Activated naive CD4-positive, alpha-beta T cell treated with anti-CD3 and anti-CD28 coated beads for 36 hours (primary cell): ENCODE measurements at regions of chr11 and their contacts with region 1.

Region 1: GRCh38 chr11:575996-576768 is at the start of gene PHRF1:
- DNase-seq: peak; percentile 96
- H3K4me3 Mint-ChIP-seq: peak within 1 kb of the TSS; percentile 88
- H3K27ac Mint-ChIP-seq: peak within 1 kb of the TSS; percentile 99
- H3K4me1 Mint-ChIP-seq: peaks cover 48% of the 10 kb centered on the region
- H3K27me3 Mint-ChIP-seq: peaks cover 6% of the 10 kb centered on the region
- total RNA-seq, gene PHRF1: 25.6 to 26.1 TPM

Region 2: GRCh38 chr11:406978-407739 is 169.0 kb before region 1 on chr11:
- CTCF ChIA-PET with region 1: no interaction called
- intact Hi-C with region 1: loop called (anchors 1 kb)
- DNase-seq: peak; percentile 91
- H3K4me3 Mint-ChIP-seq: peak overlapping the region; percentile 58
- H3K27ac Mint-ChIP-seq: no peak overlapping the region
- H3K4me1 Mint-ChIP-seq: peaks cover 2% of the 10 kb centered on the region
- H3K27me3 Mint-ChIP-seq: no peaks in the 10 kb centered on the region

Region 3: GRCh38 chr11:535519-536454 is 40.4 kb before region 1 on chr11 and contains the start of gene HRAS:
- CTCF ChIA-PET with region 1: no interaction called
- intact Hi-C with region 1: loop called (anchors 1 kb)
- DNase-seq: peak; percentile 94
- H3K4me3 Mint-ChIP-seq: peak within 1 kb of the TSS; percentile 88
- H3K27ac Mint-ChIP-seq: peak within 1 kb of the TSS; percentile 69
- H3K4me1 Mint-ChIP-seq: peaks cover 7% of the 10 kb centered on the region
- H3K27me3 Mint-ChIP-seq: no peaks in the 10 kb centered on the region
- total RNA-seq, gene HRAS: 22.0 to 25.8 TPM

Region 4: DNA sequence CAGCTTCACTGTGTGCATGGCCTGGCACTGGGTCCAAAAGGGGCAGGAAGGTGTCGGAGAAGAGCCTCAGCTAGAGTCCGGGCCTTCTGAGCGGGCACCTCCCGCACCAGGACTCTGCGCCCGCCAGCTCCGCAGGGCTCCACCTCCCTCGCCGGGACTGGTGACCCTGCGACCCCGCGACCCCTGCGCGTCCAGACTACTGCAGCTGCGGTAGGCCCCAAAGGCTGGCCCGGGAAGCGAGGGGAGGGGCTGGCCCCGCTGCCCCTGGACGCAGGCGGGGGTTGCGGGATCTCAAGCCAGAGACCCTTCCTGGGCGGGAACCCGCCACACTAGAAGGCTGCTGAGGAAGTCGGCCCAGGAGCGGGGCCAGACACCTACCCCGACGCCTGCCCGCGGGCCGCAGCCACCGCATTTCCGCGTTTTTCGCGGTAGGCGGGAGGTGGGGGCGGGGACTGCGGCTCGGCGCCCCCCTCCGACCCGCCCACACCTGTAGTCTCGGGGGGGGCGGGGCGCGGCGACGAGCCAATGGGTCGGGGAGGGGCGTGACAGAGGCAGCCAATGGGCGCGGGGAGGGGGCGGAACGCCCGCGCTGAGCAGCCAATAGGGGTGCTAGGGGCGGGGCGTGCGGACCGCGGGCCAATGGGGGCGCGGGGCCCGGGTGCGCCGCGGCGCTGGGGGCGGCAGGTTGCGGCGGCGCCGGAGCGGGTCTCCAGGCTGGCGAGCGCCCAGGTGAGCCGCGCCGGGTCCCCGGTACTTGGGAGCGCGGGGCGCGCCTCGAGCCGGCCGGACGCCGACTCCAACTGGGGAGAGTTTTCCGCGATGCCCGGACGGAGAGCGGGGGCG is 15.7 kb before region 1 on chr11 and contains the starts of genes LMNTD2 and RASSF7:
- CTCF ChIA-PET with region 1: no interaction called
- intact Hi-C with region 1: loop called (anchors 1 kb)
- DNase-seq: peak; percentile 95
- H3K4me3 Mint-ChIP-seq: peak within 1 kb of the TSS; percentile 84
- H3K27ac Mint-ChIP-seq: peak within 1 kb of the TSS; percentile 76
- H3K4me1 Mint-ChIP-seq: peaks cover 12% of the 10 kb centered on the region
- H3K27me3 Mint-ChIP-seq: peaks cover 3% of the 10 kb centered on the region
- total RNA-seq, gene LMNTD2: 4.5 to 5.2 TPM
- total RNA-seq, gene RASSF7: 8.3 to 9.9 TPM